ENCODE measurements at regions of chr15 and their contacts with region 1.

Region 1: GRCh38 chr15:74382004-74382816 is 14.8 kb upstream of the CYP11A1 start:
- DNase-seq: no peak
- ATAC-seq: peak; percentile 53
- H3K4me3 ChIP-seq: no peak overlapping the region
- H3K27ac ChIP-seq: peak overlapping the region; percentile 97
- H3K4me1 ChIP-seq: peaks cover 71% of the 10 kb centered on the region
- H3K27me3 ChIP-seq: no peaks in the 10 kb centered on the region
- CTCF ChIP-seq: peak; percentile 93 to 98 (median 97); a peak in 5 of 6 replicates
- EP300 ChIP-seq: no peak
- POLR2A ChIP-seq: no peak
- RAD21 ChIP-seq: peak; percentile 96

Region 2: DNA sequence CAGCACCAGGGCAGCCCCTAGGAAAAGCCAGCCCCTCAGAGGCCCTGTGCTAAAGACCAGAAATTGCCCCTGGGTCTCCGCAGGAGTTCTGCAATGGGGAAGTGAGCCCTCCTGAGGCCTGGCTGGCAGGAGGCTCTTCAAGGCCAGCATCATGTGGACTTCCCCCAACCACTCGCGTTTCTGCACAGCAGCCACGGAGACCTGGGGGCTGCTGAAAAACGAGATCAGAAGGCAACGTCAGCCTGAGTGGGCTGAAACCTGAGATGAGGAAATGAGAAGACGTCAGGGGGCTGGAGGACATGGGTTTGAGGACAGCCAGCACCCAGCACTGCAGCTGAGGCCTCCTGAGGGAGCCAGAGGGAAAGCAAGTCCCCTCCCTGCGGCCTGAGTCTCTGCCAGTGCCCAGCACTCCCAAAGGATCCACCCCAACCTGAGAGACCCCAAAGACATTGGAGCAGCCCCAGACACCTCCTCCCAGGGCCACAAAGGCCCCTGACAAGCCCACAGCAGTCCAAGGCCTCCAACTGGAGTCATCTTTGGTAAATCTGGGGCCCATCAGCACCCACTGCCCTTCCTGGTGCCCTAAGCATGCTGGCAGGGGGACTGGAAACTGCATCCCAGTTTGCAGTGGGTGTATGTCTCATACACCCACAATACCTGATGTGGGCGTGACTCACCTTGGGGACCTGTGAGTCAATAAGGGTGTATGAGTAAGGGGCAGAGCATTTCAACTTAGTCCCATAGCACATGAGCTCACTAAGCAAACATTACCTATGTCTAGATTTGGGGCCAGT is 14.4 kb after region 1 on chr15:
- CTCF ChIA-PET with region 1: interaction called, 226 read pairs
- POLR2A ChIA-PET with region 1: interaction called, 302 read pairs
- RAD21 ChIA-PET with region 1: interaction called, 262 read pairs
- SMC1A ChIA-PET with region 1: interaction called, 336 read pairs
- in situ Hi-C with region 1: no loop called
- intact Hi-C with region 1: loop called (anchors 1 kb)
- DNase-seq: peak; percentile 93
- ATAC-seq: peak; percentile 57
- H3K4me3 ChIP-seq: peak overlapping the region; percentile 54
- H3K27ac ChIP-seq: peak overlapping the region; percentile 100
- H3K4me1 ChIP-seq: peaks cover 94% of the 10 kb centered on the region
- H3K27me3 ChIP-seq: no peaks in the 10 kb centered on the region
- CTCF ChIP-seq: peak in 2 of 3 experiments; percentile 17 to 23; a peak in 2 of 6 replicates
- EP300 ChIP-seq: peak; percentile 95 to 96; a peak in 3 of 4 replicates
- POLR2A ChIP-seq: no peak
- RAD21 ChIP-seq: peak; percentile 27; the same call in 1 of the 2 replicates

Region 3: GRCh38 chr15:74422650-74423430 is 40.6 kb after region 1 on chr15:
- CTCF ChIA-PET with region 1: interaction called, 655 read pairs
- POLR2A ChIA-PET with region 1: interaction called, 143 read pairs
- RAD21 ChIA-PET with region 1: interaction called, 228 read pairs
- SMC1A ChIA-PET with region 1: interaction called, 544 read pairs
- in situ Hi-C with region 1: no loop called
- intact Hi-C with region 1: no loop called
- DNase-seq: no peak
- ATAC-seq: peak; percentile 44
- H3K4me3 ChIP-seq: peak overlapping the region; percentile 98
- H3K27ac ChIP-seq: peak overlapping the region; percentile 49
- H3K4me1 ChIP-seq: peaks cover 79% of the 10 kb centered on the region
- H3K27me3 ChIP-seq: no peaks in the 10 kb centered on the region
- CTCF ChIP-seq: no peak; a peak in 1 of 6 replicates
- EP300 ChIP-seq: no peak
- POLR2A ChIP-seq: peak; percentile 48
- RAD21 ChIP-seq: no peak

Region 4: GRCh38 chr15:74438721-74439316 is 56.6 kb after region 1 on chr15:
- CTCF ChIA-PET with region 1: interaction called, 655 read pairs
- POLR2A ChIA-PET with region 1: interaction called, 143 read pairs
- RAD21 ChIA-PET with region 1: interaction called, 228 read pairs
- SMC1A ChIA-PET with region 1: interaction called, 544 read pairs
- in situ Hi-C with region 1: loop called (anchors 5 kb)
- intact Hi-C with region 1: loop called (anchors 1 kb)
- DNase-seq: peak; percentile 55
- ATAC-seq: peak; percentile 83
- H3K4me3 ChIP-seq: no peak overlapping the region
- H3K27ac ChIP-seq: no peak overlapping the region
- H3K4me1 ChIP-seq: peaks cover 18% of the 10 kb centered on the region
- H3K27me3 ChIP-seq: no peaks in the 10 kb centered on the region
- CTCF ChIP-seq: peak; percentile 94 to 97 (median 95)
- EP300 ChIP-seq: no peak
- POLR2A ChIP-seq: no peak
- RAD21 ChIP-seq: peak; percentile 100

Region 5: GRCh38 chr15:74489518-74490338 is 107.5 kb after region 1 on chr15:
- CTCF ChIA-PET with region 1: interaction called, 11 read pairs
- POLR2A ChIA-PET with region 1: interaction called, 10 read pairs
- RAD21 ChIA-PET with region 1: interaction called, 7 read pairs
- SMC1A ChIA-PET with region 1: interaction called, 12 read pairs
- in situ Hi-C with region 1: no loop called
- intact Hi-C with region 1: loop called (anchors 2 kb)
- DNase-seq: peak; percentile 53
- ATAC-seq: peak; percentile 96
- H3K4me3 ChIP-seq: no peak overlapping the region
- H3K27ac ChIP-seq: peak overlapping the region; percentile 54
- H3K4me1 ChIP-seq: peaks cover 8% of the 10 kb centered on the region
- H3K27me3 ChIP-seq: no peaks in the 10 kb centered on the region
- CTCF ChIP-seq: peak; percentile 64 to 83 (median 82)
- EP300 ChIP-seq: no peak
- POLR2A ChIP-seq: peak; percentile 66; the same call in 1 of the 2 replicates
- RAD21 ChIP-seq: peak; percentile 65

Region 6: GRCh38 chr15:74787251-74788041 is 405.2 kb after region 1 on chr15:
- CTCF ChIA-PET with region 1: interaction called, 4 read pairs
- POLR2A ChIA-PET with region 1: interaction called, 6 read pairs
- RAD21 ChIA-PET with region 1: interaction called, 9 read pairs
- SMC1A ChIA-PET with region 1: interaction called, 11 read pairs
- in situ Hi-C with region 1: no loop called
- intact Hi-C with region 1: no loop called
- DNase-seq: peak; percentile 97
- ATAC-seq: peak; percentile 58
- H3K4me3 ChIP-seq: peak overlapping the region; percentile 94
- H3K27ac ChIP-seq: peak overlapping the region; percentile 96
- H3K4me1 ChIP-seq: peaks cover 55% of the 10 kb centered on the region
- H3K27me3 ChIP-seq: no peaks in the 10 kb centered on the region
- CTCF ChIP-seq: peak; percentile 79 to 93 (median 82)
- EP300 ChIP-seq: peak; percentile 83 to 88
- POLR2A ChIP-seq: peak; percentile 76
- RAD21 ChIP-seq: peak; percentile 45; the same call in 1 of the 2 replicates